A549 (cell line): ENCODE measurements at regions of chr1 and their contacts with region 1.

Region 1: GRCh38 chr1:110087812-110088738 is 17.6 kb upstream of the ALX3 start:
- DNase-seq: peak; percentile 35 to 64
- ATAC-seq: peak; percentile 90 to 97
- H3K4me3 ChIP-seq: no peak overlapping the region
- H3K27ac ChIP-seq: no peak overlapping the region
- H3K4me1 ChIP-seq: no peaks in the 10 kb centered on the region
- CTCF ChIP-seq: peak; percentile 42; the same call in 1 of the 3 replicates
- EP300 ChIP-seq: no peak
- POLR2A ChIP-seq: no peak
- RAD21 ChIP-seq: peak; percentile 30 to 52; a peak in 3 of 5 replicates

Region 2: GRCh38 chr1:109828756-109829505 is 259.1 kb before region 1 on chr1:
- CTCF ChIA-PET with region 1: no interaction called
- POLR2A ChIA-PET with region 1: no interaction called
- DNase-seq: no peak
- ATAC-seq: no peak
- H3K4me3 ChIP-seq: no peak overlapping the region
- H3K27ac ChIP-seq: peak overlapping the region; percentile 45 to 98; a peak in 5 of 6 replicates
- H3K4me1 ChIP-seq: peaks cover 47% of the 10 kb centered on the region
- CTCF ChIP-seq: no peak
- EP300 ChIP-seq: no peak
- POLR2A ChIP-seq: no peak
- RAD21 ChIP-seq: no peak

Region 3: DNA sequence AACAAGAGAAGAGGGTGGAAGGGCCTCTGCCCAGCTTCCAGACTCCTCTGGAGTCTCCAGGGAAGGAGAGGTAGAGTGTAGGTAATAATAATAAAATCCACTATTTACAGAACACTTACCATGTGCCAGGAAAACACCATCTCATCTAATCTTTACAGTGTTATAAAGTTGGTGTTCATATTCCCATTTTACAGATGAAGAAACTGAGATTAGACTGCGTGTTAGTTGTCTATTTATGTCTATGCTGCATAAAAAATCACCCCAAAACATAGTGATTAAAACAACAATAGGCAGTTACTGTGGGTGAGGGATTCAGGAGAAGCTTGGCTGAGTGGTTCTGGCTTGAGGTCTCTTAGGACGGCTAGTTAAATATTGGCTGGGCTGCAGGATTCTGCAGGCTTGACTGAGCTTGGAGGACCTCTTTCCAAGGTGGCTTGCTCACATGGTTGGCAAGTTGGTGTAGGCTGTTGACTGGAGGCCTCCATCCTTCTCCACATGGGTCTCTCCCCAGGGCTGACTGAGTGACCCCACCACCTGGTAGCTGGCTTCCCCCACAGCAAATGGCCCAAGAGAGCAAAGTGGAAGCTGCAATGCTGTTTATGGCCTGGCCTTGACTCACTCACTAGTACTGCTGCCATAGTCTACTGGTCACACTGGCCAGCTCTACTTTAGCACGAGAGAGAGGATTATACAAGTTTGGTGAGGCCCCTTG is 11.1 kb before region 1 on chr1:
- CTCF ChIA-PET with region 1: interaction called, 16 read pairs
- POLR2A ChIA-PET with region 1: no interaction called
- DNase-seq: no peak
- ATAC-seq: no peak
- H3K4me3 ChIP-seq: no peak overlapping the region
- H3K27ac ChIP-seq: no peak overlapping the region
- H3K4me1 ChIP-seq: no peaks in the 10 kb centered on the region
- CTCF ChIP-seq: no peak
- EP300 ChIP-seq: no peak
- POLR2A ChIP-seq: no peak
- RAD21 ChIP-seq: no peak

Region 4: GRCh38 chr1:110097887-110098681 is 10.0 kb after region 1 on chr1:
- CTCF ChIA-PET with region 1: interaction called, 75 read pairs
- POLR2A ChIA-PET with region 1: no interaction called
- DNase-seq: peak in 1 of 2 experiments; percentile 14
- ATAC-seq: peak in 1 of 2 experiments; percentile 30; a peak in 3 of 6 replicates
- H3K4me3 ChIP-seq: no peak overlapping the region
- H3K27ac ChIP-seq: peak overlapping the region in 1 of 2 experiments; percentile 43; a peak in 3 of 6 replicates
- H3K4me1 ChIP-seq: peaks cover 7% of the 10 kb centered on the region; the same call in 1 of the 3 replicates
- CTCF ChIP-seq: no peak
- EP300 ChIP-seq: no peak
- POLR2A ChIP-seq: no peak
- RAD21 ChIP-seq: no peak

Region 5: DNA sequence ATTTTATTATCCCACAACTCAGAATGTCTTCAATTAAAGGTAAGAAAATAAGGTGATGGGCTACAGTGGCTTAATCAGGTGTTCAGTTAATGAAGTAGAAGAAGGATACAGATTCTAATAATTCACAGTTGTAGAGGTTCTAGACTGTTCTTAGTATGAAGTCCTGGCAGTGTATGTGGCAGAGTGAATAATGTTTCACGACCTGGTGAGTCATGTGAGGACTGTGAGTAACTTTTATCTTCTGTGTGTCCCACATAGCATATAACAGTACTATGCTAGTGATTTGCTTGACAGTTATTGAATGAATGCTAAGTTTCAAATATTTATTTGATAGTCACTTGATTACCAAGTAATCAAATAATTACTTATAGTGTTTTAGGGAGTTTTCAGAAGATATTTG is 282.8 kb after region 1 on chr1:
- CTCF ChIA-PET with region 1: no interaction called
- POLR2A ChIA-PET with region 1: no interaction called
- DNase-seq: no peak
- ATAC-seq: peak; percentile 74 to 76; a peak in 4 of 6 replicates
- H3K4me3 ChIP-seq: no peak overlapping the region
- H3K27ac ChIP-seq: no peak overlapping the region
- H3K4me1 ChIP-seq: peaks cover 16% of the 10 kb centered on the region; the same call in 2 of the 3 replicates
- CTCF ChIP-seq: no peak
- EP300 ChIP-seq: no peak
- POLR2A ChIP-seq: no peak
- RAD21 ChIP-seq: no peak